CD4-positive, alpha-beta T cell (primary cell): ENCODE measurements at regions of chr11 and their contacts with region 1.

Region 1: DNA sequence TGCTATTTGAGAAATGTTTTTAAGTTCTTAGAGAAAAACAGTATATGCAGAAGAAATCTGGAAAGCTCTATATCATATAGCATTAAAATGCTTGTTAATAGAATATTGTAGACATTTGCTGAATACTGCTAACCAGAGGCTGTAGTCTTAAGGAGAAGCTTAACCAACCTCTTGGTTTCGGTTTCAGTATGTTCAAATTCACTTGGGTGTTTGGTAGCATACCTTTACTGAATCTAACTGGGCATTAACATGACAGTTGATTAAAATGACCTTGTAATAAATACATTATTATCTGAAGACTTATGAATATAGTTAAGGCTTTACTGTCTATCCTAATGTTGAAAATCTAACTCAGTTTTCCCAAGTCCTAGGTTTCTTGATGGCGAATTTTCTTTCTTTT is 5.4 kb downstream of the PCF11 start:
- DNase-seq: peak in 3 of 14 experiments; percentile 60 to 67 (median 64)
- ATAC-seq: peak; percentile 39
- H3K4me3 ChIP-seq: no peak overlapping the region
- H3K4me3 Mint-ChIP-seq: peak overlapping the region; percentile 75
- H3K27ac ChIP-seq: peak overlapping the region; percentile 2 to 45
- H3K27ac Mint-ChIP-seq: peak overlapping the region; percentile 100
- H3K4me1 ChIP-seq: peaks cover 19% of the 10 kb centered on the region
- H3K4me1 Mint-ChIP-seq: peaks cover 77% of the 10 kb centered on the region
- H3K27me3 ChIP-seq: no peaks in the 10 kb centered on the region
- H3K27me3 Mint-ChIP-seq: no peaks in the 10 kb centered on the region
- CTCF ChIP-seq: no peak

Region 2: DNA sequence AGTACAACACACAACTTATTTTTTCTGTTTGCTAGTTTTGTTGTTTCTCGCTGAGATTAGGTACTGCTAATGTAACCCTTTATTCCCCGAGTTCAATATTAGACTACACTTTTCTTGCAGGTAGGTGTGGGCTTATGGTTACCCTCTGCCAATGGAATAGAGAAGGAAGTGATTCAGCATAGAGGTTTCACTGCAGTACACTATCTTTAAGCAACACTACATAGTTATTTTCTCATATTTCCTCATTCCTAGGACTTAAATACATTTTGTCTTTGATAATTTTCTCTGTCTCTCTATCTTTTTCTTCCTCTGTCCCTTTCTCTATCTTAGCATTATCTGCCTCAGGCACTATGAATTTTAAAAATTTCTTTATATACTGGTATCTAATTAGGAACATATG is 1219.7 kb before region 1 on chr11:
- CTCF ChIA-PET with region 1: no interaction called
- POLR2A ChIA-PET with region 1: no interaction called
- intact Hi-C with region 1: no loop called
- DNase-seq: no peak
- ATAC-seq: no peak
- H3K4me3 ChIP-seq: no peak overlapping the region
- H3K4me3 Mint-ChIP-seq: no peak overlapping the region
- H3K27ac ChIP-seq: no peak overlapping the region
- H3K27ac Mint-ChIP-seq: no peak overlapping the region
- H3K4me1 ChIP-seq: no peaks in the 10 kb centered on the region
- H3K4me1 Mint-ChIP-seq: no peaks in the 10 kb centered on the region
- H3K27me3 ChIP-seq: no peaks in the 10 kb centered on the region
- H3K27me3 Mint-ChIP-seq: no peaks in the 10 kb centered on the region
- CTCF ChIP-seq: no peak

Region 3: GRCh38 chr11:83174008-83174407 is 11.6 kb after region 1 on chr11:
- CTCF ChIA-PET with region 1: interaction called, 6 read pairs
- POLR2A ChIA-PET with region 1: interaction called, 39 read pairs
- intact Hi-C with region 1: loop called (anchors 2 kb)
- DNase-seq: no peak
- ATAC-seq: no peak
- H3K4me3 ChIP-seq: no peak overlapping the region
- H3K4me3 Mint-ChIP-seq: peak overlapping the region; percentile 14
- H3K27ac ChIP-seq: no peak overlapping the region
- H3K27ac Mint-ChIP-seq: peak overlapping the region; percentile 66
- H3K4me1 ChIP-seq: peaks cover 40% of the 10 kb centered on the region
- H3K4me1 Mint-ChIP-seq: peaks cover 75% of the 10 kb centered on the region
- H3K27me3 ChIP-seq: no peaks in the 10 kb centered on the region
- H3K27me3 Mint-ChIP-seq: no peaks in the 10 kb centered on the region
- CTCF ChIP-seq: no peak